Prostate gland (tissue), 2 donors: ENCODE measurements at regions of chr2 and their contacts with region 1.

Region 1: DNA sequence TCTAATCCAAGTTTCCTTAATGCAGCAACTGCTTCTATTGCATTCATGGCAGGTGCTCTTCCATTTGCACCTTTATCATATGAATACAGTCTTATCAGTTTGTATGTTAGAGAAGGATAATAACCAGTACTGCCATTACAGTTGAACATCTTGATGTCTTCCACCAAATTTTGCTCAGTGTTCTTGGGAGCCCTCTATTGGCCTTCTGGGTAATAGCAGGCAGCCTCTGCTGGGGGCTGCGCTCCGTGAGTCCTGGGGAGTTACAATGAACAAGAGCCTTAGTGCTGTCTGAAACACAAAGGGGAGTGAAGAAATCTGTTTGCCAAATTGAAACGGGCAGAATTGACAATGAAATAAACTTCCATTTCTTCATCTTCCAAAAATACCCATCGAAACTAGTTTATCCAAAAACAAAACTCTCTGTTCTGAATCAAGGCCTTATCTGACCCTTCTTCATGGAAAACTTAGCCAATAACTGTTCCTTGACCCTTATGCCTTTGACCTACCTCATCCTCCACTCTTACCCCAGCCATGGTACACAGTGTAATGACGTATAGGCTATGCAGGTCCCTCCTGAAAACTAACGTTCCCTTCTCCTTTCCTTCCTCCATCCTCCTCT is 79.9 kb downstream of the ALK start:
- DNase-seq: peak; percentile 5
- H3K4me3 ChIP-seq: no peak overlapping the region
- H3K27ac ChIP-seq: no peak overlapping the region
- H3K4me1 ChIP-seq: no peaks in the 10 kb centered on the region
- H3K27me3 ChIP-seq: no peaks in the 10 kb centered on the region
- CTCF ChIP-seq: peak; percentile 26 to 66 (median 62)
- POLR2A ChIP-seq: no peak

Region 2: DNA sequence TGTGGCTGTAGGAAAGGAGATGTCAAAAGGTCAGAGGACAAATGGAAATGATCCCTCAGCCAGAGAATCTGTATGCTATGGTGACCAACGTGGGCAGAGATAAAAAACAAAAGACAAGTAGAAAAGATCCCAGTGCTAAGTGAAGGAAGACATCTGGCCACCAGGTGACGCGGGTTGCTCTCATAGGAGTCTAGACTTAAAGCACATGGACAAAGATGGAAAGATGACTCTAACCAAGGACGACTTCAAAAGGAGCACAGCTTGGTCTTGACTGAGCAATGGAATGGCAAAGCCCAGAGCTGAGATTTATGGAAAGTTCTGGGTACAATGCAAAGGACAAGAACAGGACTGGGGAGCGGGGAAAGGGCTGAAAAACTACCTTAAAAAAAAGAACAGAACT is 629.5 kb before region 1 on chr2:
- intact Hi-C with region 1: loop called (anchors 10 kb)
- DNase-seq: no peak
- H3K4me3 ChIP-seq: no peak overlapping the region
- H3K27ac ChIP-seq: no peak overlapping the region
- H3K4me1 ChIP-seq: no peaks in the 10 kb centered on the region
- H3K27me3 ChIP-seq: no peaks in the 10 kb centered on the region
- CTCF ChIP-seq: peak in 1 of 4 experiments; percentile 18
- POLR2A ChIP-seq: no peak

Region 3: GRCh38 chr2:29295857-29296256 is 545.6 kb before region 1 on chr2:
- intact Hi-C with region 1: loop called (anchors 10 kb)
- DNase-seq: no peak
- H3K4me3 ChIP-seq: no peak overlapping the region
- H3K27ac ChIP-seq: no peak overlapping the region
- H3K4me1 ChIP-seq: no peaks in the 10 kb centered on the region
- H3K27me3 ChIP-seq: no peaks in the 10 kb centered on the region
- CTCF ChIP-seq: no peak
- POLR2A ChIP-seq: no peak